ENCODE measurements at regions of chr2 and their contacts with region 1.

Region 1: DNA sequence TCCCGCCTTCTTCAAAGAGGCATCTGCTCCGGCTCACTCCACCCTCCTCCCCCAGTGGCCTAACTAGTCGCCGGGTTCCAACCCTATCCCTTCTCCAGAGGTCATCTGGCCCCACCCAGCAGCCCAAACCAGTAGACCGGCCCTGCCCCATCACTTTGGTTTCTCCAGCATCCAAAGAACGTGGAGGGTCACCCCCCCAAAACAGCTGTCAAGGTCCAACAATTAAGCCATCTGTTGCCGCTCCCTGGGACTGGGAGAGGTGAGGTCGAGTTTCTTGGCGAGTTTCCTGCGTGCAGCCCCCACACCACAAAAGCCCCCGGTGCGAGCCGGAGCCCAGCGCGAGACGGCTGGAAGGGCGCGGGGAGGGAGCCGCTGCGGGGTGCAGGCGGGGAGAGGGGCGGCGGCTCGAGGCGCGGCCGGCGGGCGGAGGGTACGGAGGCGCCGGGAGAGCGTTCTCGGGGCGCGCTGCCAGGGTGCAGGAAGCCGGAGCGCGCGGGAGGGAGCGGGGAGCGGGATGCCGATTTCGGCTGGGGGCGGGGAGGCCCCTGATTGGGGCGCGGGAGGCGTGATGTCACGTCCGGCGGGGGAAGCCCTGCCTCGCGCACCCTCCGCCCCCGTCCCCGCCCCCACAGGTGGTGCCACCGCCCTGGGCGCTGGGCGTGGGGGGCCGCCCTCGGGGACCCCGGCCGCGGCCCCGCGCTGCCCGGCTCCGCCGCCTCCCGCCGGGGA is 571 bp upstream of the GPC1 start:
- DNase-seq: peak; percentile 94 to 97 (median 95)
- H3K4me3 ChIP-seq: peak overlapping the region in 3 of 4 donors; percentile 10 to 96 (median 44)
- H3K27ac ChIP-seq: peak overlapping the region; percentile 29 to 100 (median 87)
- H3K4me1 ChIP-seq: peaks cover 33 to 37% of the 10 kb centered on the region in 2 donors
- H3K27me3 ChIP-seq: no peaks in the 10 kb centered on the region
- CTCF ChIP-seq: no peak
- POLR2A ChIP-seq: peak in 1 of 2 donors; percentile 43

Region 2: GRCh38 chr2:240149943-240150784 is 284.7 kb before region 1 on chr2:
- intact Hi-C with region 1: loop called in 1 of 2 experiments (anchors 5 kb)
- DNase-seq: peak in 4 of 7 donors; percentile 50 to 59 (median 56)
- H3K4me3 ChIP-seq: no peak overlapping the region
- H3K27ac ChIP-seq: no peak overlapping the region
- H3K4me1 ChIP-seq: no peaks in the 10 kb centered on the region
- H3K27me3 ChIP-seq: peaks cover 6% of the 10 kb centered on the region
- CTCF ChIP-seq: peak; percentile 56 to 68 (median 60)
- POLR2A ChIP-seq: no peak

Region 3: GRCh38 chr2:240232961-240233893 is 201.7 kb before region 1 on chr2:
- intact Hi-C with region 1: loop called (anchors 2 to 5 kb)
- DNase-seq: peak; percentile 93 to 99 (median 98)
- H3K4me3 ChIP-seq: peak overlapping the region in 2 of 4 donors; percentile 41 to 44
- H3K27ac ChIP-seq: peak overlapping the region in 3 of 5 donors; percentile 44 to 76 (median 45)
- H3K4me1 ChIP-seq: peaks cover 24 to 25% of the 10 kb centered on the region in 2 donors
- H3K27me3 ChIP-seq: no peaks in the 10 kb centered on the region
- CTCF ChIP-seq: peak; percentile 85 to 96 (median 90)
- POLR2A ChIP-seq: no peak

Region 4: GRCh38 chr2:240387669-240388358 is 47.1 kb before region 1 on chr2:
- intact Hi-C with region 1: loop called in 1 of 2 experiments (anchors 5 kb)
- DNase-seq: peak; percentile 90 to 97 (median 96)
- H3K4me3 ChIP-seq: no peak overlapping the region
- H3K27ac ChIP-seq: peak overlapping the region in 4 of 5 donors; percentile 39 to 76 (median 64)
- H3K4me1 ChIP-seq: peaks cover 7 to 11% of the 10 kb centered on the region in 2 donors
- H3K27me3 ChIP-seq: no peaks in the 10 kb centered on the region
- CTCF ChIP-seq: peak in 2 of 6 experiments; percentile 21 to 41
- POLR2A ChIP-seq: peak in 1 of 2 donors; percentile 25

Region 5: GRCh38 chr2:240972636-240973521 is 538.0 kb after region 1 on chr2:
- intact Hi-C with region 1: no loop called
- DNase-seq: peak in 2 of 7 donors; percentile 1 to 12
- H3K4me3 ChIP-seq: no peak overlapping the region
- H3K27ac ChIP-seq: no peak overlapping the region
- H3K4me1 ChIP-seq: peaks cover 0 to 7% of the 10 kb centered on the region in 2 donors
- H3K27me3 ChIP-seq: peaks cover 7% of the 10 kb centered on the region
- CTCF ChIP-seq: no peak
- POLR2A ChIP-seq: no peak